Heart right ventricle (tissue), 16 donors: ENCODE measurements at regions of chr17 and their contacts with region 1.

Region 1: GRCh38 chr17:77834170-77835115 is 124.1 kb upstream of the TNRC6C start:
- DNase-seq: peak; percentile 67 to 68
- ATAC-seq: peak in 7 of 8 donors; percentile 15 to 70 (median 35)
- H3K4me3 ChIP-seq: peak overlapping the region in 1 of 10 donors; percentile 10
- H3K27ac ChIP-seq: peak overlapping the region in 7 of 10 donors; percentile 19 to 70 (median 56)
- H3K4me1 ChIP-seq: peaks cover 28 to 63% (median 48%) of the 10 kb centered on the region in 9 donors
- H3K27me3 ChIP-seq: peaks cover 0 to 3% (median 0%) of the 10 kb centered on the region in 7 donors
- CTCF ChIP-seq: no peak

Region 2: DNA sequence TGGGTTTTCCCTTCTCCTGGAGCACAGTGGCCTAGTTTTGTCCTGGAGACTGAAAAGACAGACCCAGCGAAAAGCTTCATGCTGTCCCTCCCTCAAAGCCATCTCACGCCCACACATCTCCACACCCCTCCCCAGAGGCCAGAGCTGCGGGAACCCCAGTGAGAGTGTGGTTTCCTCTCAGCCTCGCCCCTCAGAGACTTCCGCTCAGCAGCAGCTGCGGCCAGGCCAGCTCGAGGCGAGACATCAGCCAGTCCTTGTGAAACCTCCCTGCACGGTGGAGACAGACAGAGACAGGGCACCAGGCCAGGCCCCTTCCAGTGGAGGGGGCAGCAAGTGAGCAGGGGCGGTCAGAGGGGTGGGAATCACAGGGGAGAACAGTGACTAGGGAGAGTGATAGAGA is 47.1 kb after region 1 on chr17:
- intact Hi-C with region 1: loop called in 5 of 10 experiments (anchors 1 to 10 kb)
- DNase-seq: peak; percentile 89
- ATAC-seq: peak; percentile 83 to 94 (median 92)
- H3K4me3 ChIP-seq: peak overlapping the region in 2 of 10 donors; percentile 10 to 13
- H3K27ac ChIP-seq: peak overlapping the region in 9 of 10 donors; percentile 58 to 93 (median 77)
- H3K4me1 ChIP-seq: peaks cover 25 to 57% (median 37%) of the 10 kb centered on the region in 9 donors
- H3K27me3 ChIP-seq: no peaks in the 10 kb centered on the region
- CTCF ChIP-seq: no peak